ENCODE measurements at regions of chr2 and their contacts with region 1.

Region 1: DNA sequence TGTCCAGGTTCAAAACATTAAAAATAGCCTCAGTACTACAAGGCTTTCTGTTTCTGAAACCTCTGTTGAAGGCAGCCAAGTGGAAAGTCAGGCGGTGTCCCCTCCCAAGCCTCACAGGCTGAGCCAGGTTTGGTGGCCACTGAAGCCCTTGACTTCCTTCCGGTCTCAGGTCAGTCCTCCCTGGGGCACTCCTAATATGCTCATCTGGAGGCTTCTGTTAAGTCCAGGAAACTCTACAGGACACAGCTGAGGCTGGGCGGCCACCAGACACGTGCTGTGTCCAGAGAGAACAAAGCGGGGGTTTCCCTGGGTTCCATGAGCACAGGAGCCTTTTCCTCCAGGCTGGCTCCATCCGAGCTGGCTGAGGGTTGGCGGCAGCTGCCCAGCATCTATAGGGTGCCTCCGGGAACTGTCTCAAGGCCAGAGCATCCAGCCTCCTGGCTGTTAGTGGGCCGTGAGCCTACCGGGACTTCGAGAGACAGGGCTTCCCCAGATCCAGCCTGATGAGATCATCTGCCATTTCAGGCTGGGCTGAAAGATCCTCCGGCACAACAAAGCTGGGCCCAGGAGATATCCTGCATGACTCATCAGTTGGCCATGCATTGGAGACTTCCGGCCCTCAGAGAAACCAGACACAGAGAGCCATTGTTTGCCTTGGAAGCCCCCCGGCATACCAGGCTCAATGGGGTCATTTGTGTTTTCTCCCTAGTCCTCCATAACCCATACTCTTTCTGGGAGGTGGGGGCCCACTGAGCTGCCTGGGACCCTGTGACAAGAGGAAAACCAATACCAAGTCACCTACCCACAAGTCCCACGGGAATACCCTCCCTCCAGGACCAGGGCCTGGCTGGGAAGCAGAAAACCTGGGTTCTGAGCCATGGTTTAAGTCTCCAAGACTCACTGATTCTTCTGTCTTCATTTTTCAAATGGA is 71.7 kb downstream of the HS1BP3 start:
- DNase-seq: peak; percentile 68 to 95
- H3K4me3 ChIP-seq: peak overlapping the region in 1 of 2 donors; percentile 7
- H3K27ac ChIP-seq: peak overlapping the region; percentile 86 to 90
- H3K4me1 ChIP-seq: peaks cover 13 to 35% of the 10 kb centered on the region in 2 donors
- H3K27me3 ChIP-seq: no peaks in the 10 kb centered on the region
- CTCF ChIP-seq: no peak

Region 2: GRCh38 chr2:20212459-20212870 is 366.7 kb before region 1 on chr2:
- intact Hi-C with region 1: no loop called
- DNase-seq: no peak
- H3K4me3 ChIP-seq: no peak overlapping the region
- H3K27ac ChIP-seq: no peak overlapping the region
- H3K4me1 ChIP-seq: no peaks in the 10 kb centered on the region
- H3K27me3 ChIP-seq: no peaks in the 10 kb centered on the region
- CTCF ChIP-seq: no peak

Region 3: GRCh38 chr2:20456636-20457426 is 122.3 kb before region 1 on chr2:
- intact Hi-C with region 1: loop called (anchors 5 kb)
- DNase-seq: peak in 1 of 2 donors; percentile 54
- H3K4me3 ChIP-seq: no peak overlapping the region
- H3K27ac ChIP-seq: peak overlapping the region; percentile 60 to 76
- H3K4me1 ChIP-seq: no peaks in the 10 kb centered on the region
- H3K27me3 ChIP-seq: no peaks in the 10 kb centered on the region
- CTCF ChIP-seq: no peak

Region 4: GRCh38 chr2:20483194-20483895 is 95.8 kb before region 1 on chr2:
- intact Hi-C with region 1: no loop called
- DNase-seq: peak in 1 of 2 donors; percentile 76
- H3K4me3 ChIP-seq: no peak overlapping the region
- H3K27ac ChIP-seq: peak overlapping the region; percentile 47 to 49
- H3K4me1 ChIP-seq: peaks cover 9 to 21% of the 10 kb centered on the region in 2 donors
- H3K27me3 ChIP-seq: no peaks in the 10 kb centered on the region
- CTCF ChIP-seq: no peak

Region 5: GRCh38 chr2:20509766-20510495 is 69.2 kb before region 1 on chr2:
- intact Hi-C with region 1: loop called (anchors 5 kb)
- DNase-seq: no peak
- H3K4me3 ChIP-seq: no peak overlapping the region
- H3K27ac ChIP-seq: no peak overlapping the region
- H3K4me1 ChIP-seq: no peaks in the 10 kb centered on the region
- H3K27me3 ChIP-seq: no peaks in the 10 kb centered on the region
- CTCF ChIP-seq: no peak

Region 6: GRCh38 chr2:20595431-20596192 is 16.5 kb after region 1 on chr2:
- intact Hi-C with region 1: loop called (anchors 2 kb)
- DNase-seq: peak; percentile 22 to 69
- H3K4me3 ChIP-seq: no peak overlapping the region
- H3K27ac ChIP-seq: peak overlapping the region; percentile 73 to 87
- H3K4me1 ChIP-seq: peaks cover 20 to 43% of the 10 kb centered on the region in 2 donors
- H3K27me3 ChIP-seq: no peaks in the 10 kb centered on the region
- CTCF ChIP-seq: no peak

Region 7: GRCh38 chr2:20617892-20618467 is 38.8 kb after region 1 on chr2:
- intact Hi-C with region 1: loop called (anchors 1 kb)
- DNase-seq: peak; percentile 94 to 99
- H3K4me3 ChIP-seq: peak overlapping the region in 1 of 2 donors; percentile 7
- H3K27ac ChIP-seq: peak overlapping the region; percentile 97 to 98
- H3K4me1 ChIP-seq: peaks cover 51 to 59% of the 10 kb centered on the region in 2 donors
- H3K27me3 ChIP-seq: no peaks in the 10 kb centered on the region
- CTCF ChIP-seq: peak; percentile 49 to 76 (median 54)